ENCODE measurements at regions of chr12 and their contacts with region 1.

Region 1: GRCh38 chr12:6195665-6196535 is 4.3 kb upstream of the CD9 start:
- DNase-seq: peak; percentile 53 to 62 (median 53)
- H3K4me3 ChIP-seq: no peak overlapping the region
- H3K27ac ChIP-seq: no peak overlapping the region
- H3K4me1 ChIP-seq: peaks cover 0 to 32% (median 28%) of the 10 kb centered on the region in 4 experiments
- H3K27me3 ChIP-seq: peaks cover 0 to 4% (median 2%) of the 10 kb centered on the region in 5 experiments

Region 2: DNA sequence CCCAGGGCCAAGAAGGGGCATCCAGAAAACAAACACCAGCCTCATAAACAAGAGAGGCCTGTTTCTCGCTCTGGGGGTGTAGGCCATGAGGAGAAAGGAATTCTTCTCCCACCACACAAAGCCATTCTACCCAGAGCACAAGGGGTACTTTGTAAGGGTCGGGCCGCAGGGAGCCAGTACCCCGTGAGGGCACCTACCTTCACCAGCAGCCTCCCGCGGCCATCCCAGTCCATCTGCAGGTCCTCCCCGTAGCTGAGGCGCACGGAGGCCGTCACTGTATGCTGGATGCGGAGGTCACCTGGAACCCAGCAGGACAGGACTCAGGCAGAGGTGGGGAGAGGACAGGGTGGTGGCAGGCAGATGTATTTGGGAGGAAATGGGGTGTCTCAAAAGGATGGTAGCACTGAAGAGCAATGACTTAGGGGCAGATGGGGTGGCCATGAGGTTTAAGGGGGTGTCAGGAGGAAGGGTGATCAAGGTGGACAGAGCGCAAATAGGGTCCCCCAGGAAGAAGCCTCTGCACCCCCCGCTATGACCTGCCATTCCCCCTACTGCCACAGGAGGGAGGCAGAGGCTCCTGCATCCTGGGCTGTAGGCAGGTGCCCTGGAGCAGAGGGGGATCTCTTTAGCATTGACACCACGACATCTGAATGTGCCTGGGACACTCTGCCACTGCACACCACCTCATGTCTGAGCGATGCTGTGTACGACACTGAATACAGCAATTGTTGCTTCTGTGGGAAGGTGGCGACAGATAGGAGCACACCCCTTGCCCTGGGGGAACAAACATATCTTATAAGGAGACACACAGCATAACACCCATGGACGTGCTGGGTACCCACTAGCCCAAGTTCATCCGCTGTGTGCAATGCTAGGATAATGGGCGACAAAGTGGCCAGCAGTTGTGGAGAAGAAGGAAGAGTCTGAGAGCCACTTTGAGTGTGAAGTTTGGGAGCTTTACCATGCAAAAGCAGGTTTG is 132.9 kb before region 1 on chr12:
- CTCF ChIA-PET with region 1: interaction called, 14 read pairs
- POLR2A ChIA-PET with region 1: no interaction called
- DNase-seq: peak; percentile 67 to 84 (median 75)
- H3K4me3 ChIP-seq: no peak overlapping the region
- H3K27ac ChIP-seq: no peak overlapping the region
- H3K4me1 ChIP-seq: peaks cover 0 to 14% (median 7%) of the 10 kb centered on the region in 4 experiments
- H3K27me3 ChIP-seq: no peaks in the 10 kb centered on the region

Region 3: GRCh38 chr12:6074979-6075585 is 120.8 kb before region 1 on chr12:
- CTCF ChIA-PET with region 1: interaction called, 13 read pairs
- POLR2A ChIA-PET with region 1: no interaction called
- DNase-seq: peak; percentile 68 to 84 (median 73)
- H3K4me3 ChIP-seq: peak overlapping the region in 6 of 7 experiments; percentile 19 to 69 (median 51)
- H3K27ac ChIP-seq: peak overlapping the region in 1 of 2 experiments; percentile 50
- H3K4me1 ChIP-seq: peaks cover 19 to 49% (median 38%) of the 10 kb centered on the region in 4 experiments
- H3K27me3 ChIP-seq: no peaks in the 10 kb centered on the region

Region 4: DNA sequence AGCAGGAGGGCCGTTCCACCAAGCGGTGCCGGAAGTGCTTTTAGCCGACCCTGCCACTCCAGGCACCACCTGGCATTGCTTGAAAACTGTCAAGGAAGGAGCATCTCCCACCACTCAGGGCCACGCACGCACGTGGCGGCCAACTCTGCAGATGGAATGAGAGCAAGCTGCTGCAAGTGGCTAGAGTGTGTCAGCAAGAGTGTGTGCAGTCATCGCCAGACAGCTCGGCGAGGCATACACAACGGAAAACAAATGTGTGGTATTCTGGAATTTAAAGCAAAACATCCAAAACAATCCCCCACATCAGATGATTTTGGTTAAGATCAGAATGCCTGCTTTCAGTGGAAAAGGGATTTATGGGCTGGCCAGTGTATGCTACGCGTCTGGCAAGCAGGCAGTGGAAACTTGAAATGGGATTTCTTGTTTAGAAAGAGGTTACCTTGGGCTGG is 15.5 kb after region 1 on chr12:
- CTCF ChIA-PET with region 1: interaction called, 11 read pairs
- POLR2A ChIA-PET with region 1: no interaction called
- DNase-seq: no peak
- H3K4me3 ChIP-seq: no peak overlapping the region
- H3K27ac ChIP-seq: no peak overlapping the region
- H3K4me1 ChIP-seq: peaks cover 0 to 9% (median 3%) of the 10 kb centered on the region in 4 experiments
- H3K27me3 ChIP-seq: no peaks in the 10 kb centered on the region

Region 5: DNA sequence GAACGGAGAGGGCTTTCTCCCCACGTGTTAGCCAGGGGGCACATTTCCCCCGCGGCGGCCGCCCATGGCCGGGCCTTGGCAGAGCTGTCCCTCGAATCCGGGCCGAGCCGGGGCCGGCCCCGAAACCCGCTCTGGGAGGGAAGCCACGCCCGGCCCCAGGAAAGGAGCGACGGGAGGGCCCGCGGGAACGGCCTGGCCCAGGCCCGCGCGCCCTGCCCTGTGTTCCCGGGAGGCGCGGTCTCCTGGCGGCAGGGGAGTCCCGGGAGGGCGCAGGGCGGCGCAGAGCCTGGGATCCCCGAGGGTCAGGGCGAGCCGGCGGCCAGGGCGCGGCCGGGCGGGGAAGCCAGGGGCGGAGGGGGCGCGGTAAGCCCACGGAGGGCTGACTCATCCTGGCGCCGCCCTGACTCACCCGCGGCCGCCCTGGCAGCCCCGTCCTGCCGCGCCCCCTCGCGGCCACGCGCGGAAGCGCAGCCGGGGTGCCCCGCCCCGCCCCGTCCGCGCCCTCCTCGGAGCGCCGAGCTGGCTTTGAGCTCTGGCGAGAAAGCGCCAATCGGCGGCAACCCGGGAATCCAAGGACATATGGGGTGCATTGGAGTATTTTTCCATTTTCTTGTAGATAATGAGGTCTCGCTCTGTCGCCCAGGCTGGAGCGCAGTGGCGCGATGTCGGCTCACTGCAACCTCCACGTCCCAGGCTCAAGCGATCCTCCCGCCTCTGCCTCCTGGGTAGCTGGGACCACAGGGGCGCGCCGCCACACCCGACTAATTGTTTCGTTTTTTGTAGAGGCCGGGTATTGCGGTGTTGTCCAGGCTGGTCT is 82.7 kb after region 1 on chr12:
- CTCF ChIA-PET with region 1: interaction called, 30 read pairs
- POLR2A ChIA-PET with region 1: interaction called, 5 read pairs
- DNase-seq: peak; percentile 76 to 88 (median 85)
- H3K4me3 ChIP-seq: peak overlapping the region; percentile 48 to 76 (median 63)
- H3K27ac ChIP-seq: peak overlapping the region in 1 of 2 experiments; percentile 71
- H3K4me1 ChIP-seq: peaks cover 0 to 21% (median 15%) of the 10 kb centered on the region in 4 experiments
- H3K27me3 ChIP-seq: peaks cover 0 to 6% (median 0%) of the 10 kb centered on the region in 5 experiments

Region 6: GRCh38 chr12:6285063-6285477 is 89.2 kb after region 1 on chr12:
- CTCF ChIA-PET with region 1: interaction called, 30 read pairs
- POLR2A ChIA-PET with region 1: interaction called, 5 read pairs
- DNase-seq: peak; percentile 66 to 76 (median 68)
- H3K4me3 ChIP-seq: no peak overlapping the region
- H3K27ac ChIP-seq: no peak overlapping the region
- H3K4me1 ChIP-seq: peaks cover 0 to 10% (median 0%) of the 10 kb centered on the region in 4 experiments
- H3K27me3 ChIP-seq: no peaks in the 10 kb centered on the region

Region 7: GRCh38 chr12:6430124-6430989 is 234.5 kb after region 1 on chr12:
- CTCF ChIA-PET with region 1: no interaction called
- POLR2A ChIA-PET with region 1: no interaction called
- DNase-seq: peak; percentile 88 to 97 (median 96)
- H3K4me3 ChIP-seq: peak overlapping the region in 5 of 7 experiments; percentile 9 to 62 (median 40)
- H3K27ac ChIP-seq: peak overlapping the region in 1 of 2 experiments; percentile 76
- H3K4me1 ChIP-seq: peaks cover 8 to 48% (median 40%) of the 10 kb centered on the region in 4 experiments
- H3K27me3 ChIP-seq: no peaks in the 10 kb centered on the region